Colonic mucosa (tissue), 4 donors: ENCODE measurements at regions of chrX and their contacts with region 1.

Region 1: DNA sequence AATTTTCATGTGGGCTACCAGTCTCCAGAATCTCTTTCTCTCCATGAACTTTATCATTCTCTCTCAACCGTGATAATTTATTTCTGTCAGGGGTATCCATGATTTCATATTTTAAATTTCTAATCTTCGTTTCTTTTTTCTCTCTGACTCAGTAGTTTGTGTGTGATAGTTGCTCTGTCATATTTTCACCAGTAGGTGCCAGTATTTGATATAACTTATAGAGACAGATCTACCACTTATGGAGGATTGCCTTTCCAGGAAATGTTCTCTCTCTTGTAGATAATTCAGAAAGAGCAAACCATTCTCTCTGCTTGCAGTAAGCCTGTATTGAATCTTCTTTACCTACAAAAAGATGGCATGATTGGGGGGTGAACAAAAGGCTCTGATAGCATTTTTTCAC is 79.3 kb upstream of the DYNLT3 start:
- DNase-seq: no peak
- H3K4me3 ChIP-seq: no peak overlapping the region
- H3K27ac ChIP-seq: no peak overlapping the region
- H3K4me1 ChIP-seq: no peaks in the 10 kb centered on the region
- H3K27me3 ChIP-seq: no peaks in the 10 kb centered on the region
- CTCF ChIP-seq: peak; percentile 51

Region 2: DNA sequence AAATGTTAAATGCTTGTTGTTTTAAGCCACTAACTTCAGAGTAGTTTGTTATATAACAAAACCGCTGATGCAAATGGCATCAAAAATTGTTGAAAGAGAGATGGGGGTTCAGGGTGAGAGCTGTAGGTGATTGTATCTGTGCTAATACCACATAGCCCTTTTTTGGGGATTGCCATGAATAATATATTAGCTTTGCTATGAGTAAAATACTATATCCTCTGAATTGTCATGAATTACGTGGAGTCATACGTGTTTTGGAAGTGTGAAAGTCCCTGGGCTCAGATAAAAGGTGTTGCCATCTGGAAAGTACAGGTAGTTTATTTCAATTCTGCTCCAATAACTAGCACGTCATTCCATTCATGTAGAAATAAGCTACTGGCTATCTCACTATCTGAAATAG is 109.9 kb before region 1 on chrX:
- intact Hi-C with region 1: no loop called
- DNase-seq: no peak
- H3K4me3 ChIP-seq: no peak overlapping the region
- H3K27ac ChIP-seq: no peak overlapping the region
- H3K4me1 ChIP-seq: no peaks in the 10 kb centered on the region
- H3K27me3 ChIP-seq: peaks cover 5% of the 10 kb centered on the region
- CTCF ChIP-seq: no peak

Region 3: DNA sequence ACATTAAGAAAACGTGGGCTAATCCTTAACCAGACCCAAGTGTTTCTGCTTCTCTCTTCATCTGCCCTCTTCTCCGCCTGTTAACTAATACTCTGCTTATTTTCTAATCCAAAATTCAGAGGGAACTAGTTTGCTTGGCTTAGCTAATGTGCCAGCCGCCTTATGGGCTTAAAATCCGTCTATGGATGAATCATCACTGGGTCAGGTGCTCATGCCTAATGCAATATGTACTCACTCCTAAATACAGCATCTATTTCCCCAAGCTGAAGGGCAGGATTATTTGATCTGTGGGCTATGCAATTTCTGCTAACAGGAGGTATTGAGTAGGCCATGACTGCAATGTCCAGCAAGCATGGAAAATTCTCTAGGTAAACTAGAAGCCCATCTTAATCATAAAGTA is 91.8 kb before region 1 on chrX:
- intact Hi-C with region 1: no loop called
- DNase-seq: no peak
- H3K4me3 ChIP-seq: no peak overlapping the region
- H3K27ac ChIP-seq: no peak overlapping the region
- H3K4me1 ChIP-seq: no peaks in the 10 kb centered on the region
- H3K27me3 ChIP-seq: no peaks in the 10 kb centered on the region
- CTCF ChIP-seq: no peak

Region 4: DNA sequence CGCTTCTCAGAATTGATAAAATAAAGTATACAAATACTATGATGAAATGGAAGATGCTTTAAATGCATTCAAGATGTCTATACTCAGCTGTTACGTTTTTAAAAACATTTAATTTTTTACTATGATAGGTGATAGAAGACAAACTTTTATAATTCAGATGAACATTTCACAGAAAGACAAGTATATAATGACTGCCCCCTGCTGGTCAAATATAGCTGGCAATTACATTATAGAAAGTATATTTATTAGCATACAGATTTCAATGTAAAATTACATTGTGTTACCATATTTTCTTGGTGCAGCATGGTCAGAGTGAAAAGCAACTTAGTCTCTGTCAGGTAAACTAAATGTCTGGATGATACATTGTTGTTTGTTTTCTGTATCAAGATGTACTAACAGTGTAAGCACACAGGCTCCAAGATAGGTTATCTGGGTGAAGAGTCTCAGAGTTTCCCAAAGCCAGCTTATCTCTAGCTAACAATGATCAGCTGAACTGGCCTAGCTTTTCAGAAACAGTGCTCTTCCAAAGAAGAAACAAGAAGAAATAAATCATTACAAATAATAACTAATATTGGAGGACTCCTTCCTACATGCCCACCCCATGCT is 239.9 kb after region 1 on chrX:
- intact Hi-C with region 1: loop called (anchors 5 kb)
- DNase-seq: peak; percentile 49
- H3K4me3 ChIP-seq: no peak overlapping the region
- H3K27ac ChIP-seq: no peak overlapping the region
- H3K4me1 ChIP-seq: no peaks in the 10 kb centered on the region
- H3K27me3 ChIP-seq: no peaks in the 10 kb centered on the region
- CTCF ChIP-seq: peak; percentile 70